GM18951 (cell line): ENCODE measurements at regions of chr9 and their contacts with region 1.

Region 1: GRCh38 chr9:125626187-125626586 is 80.8 kb downstream of the MAPKAP1 start:
- POLR2A ChIP-seq: no peak

Region 2: DNA sequence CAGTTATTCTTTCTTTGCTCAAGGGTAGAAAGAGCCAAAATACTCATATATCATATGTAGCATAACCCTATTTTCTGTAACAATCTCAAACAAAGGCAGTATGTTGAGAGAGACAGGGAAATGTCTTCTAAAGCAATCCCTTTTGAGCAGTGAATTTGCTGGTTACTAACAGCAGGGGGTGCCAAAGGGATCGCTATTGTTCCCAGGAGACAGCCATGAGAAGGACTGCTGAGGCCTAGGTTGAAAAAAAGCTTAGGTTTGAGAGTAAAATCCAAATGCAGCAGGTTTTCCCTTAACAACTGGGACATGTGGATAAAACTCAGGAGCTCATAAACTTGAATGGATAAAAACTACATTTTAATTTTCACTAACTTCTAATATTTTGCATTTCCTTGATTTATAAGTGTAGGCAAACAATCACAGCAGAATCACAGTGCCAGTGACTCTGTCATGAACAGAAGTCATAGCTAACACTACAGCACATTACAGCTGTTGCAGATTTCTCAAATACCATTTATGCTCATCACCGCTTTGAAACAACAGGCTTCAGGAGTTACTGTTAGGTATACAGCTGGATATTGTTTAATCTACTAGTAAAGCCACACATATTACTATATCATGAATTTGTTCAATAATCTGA is 67.6 kb before region 1 on chr9:
- in situ Hi-C with region 1: loop called (anchors 5 kb)
- POLR2A ChIP-seq: no peak

Region 3: GRCh38 chr9:126027566-126027965 is 401.4 kb after region 1 on chr9:
- in situ Hi-C with region 1: no loop called
- POLR2A ChIP-seq: no peak

Region 4: GRCh38 chr9:126235336-126236243 is 609.4 kb after region 1 on chr9:
- in situ Hi-C with region 1: no loop called
- POLR2A ChIP-seq: no peak